ENCODE measurements at regions of chr1 and their contacts with region 1.

Region 1: GRCh38 chr1:21216835-21217811 is 40.4 kb upstream of the EIF4G3 start:
- H3K4me3 ChIP-seq: no peak overlapping the region
- H3K27ac ChIP-seq: no peak overlapping the region
- H3K4me1 ChIP-seq: no peaks in the 10 kb centered on the region
- CTCF ChIP-seq: peak; percentile 36; the same call in 1 of the 2 replicates

Region 2: DNA sequence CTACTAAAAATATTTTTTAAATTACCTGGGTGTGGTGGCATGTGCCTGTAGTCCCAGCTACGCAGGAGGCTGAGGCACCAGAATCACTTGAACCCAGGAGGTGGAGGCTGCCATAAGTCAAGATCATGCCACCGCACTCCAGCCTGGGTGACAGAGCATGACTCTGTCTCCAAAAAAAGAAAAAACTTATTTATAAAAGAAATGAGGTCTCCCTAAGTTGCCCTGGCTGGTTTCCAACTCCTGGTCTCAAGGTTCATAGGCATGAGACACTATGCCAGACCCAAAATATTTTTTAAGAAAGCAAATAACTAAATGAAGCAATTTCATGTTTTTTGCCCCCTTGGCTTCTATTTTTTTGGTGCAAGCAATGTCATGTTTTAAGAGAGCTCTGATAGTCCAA is 73.4 kb before region 1 on chr1:
- CTCF ChIA-PET with region 1: no interaction called
- POLR2A ChIA-PET with region 1: no interaction called
- H3K4me3 ChIP-seq: no peak overlapping the region
- H3K27ac ChIP-seq: no peak overlapping the region
- H3K4me1 ChIP-seq: 0 out of 2 replicates have a peak, but pooled peaks cover 3% of the 10 kb centered on the region
- CTCF ChIP-seq: no peak

Region 3: GRCh38 chr1:21244986-21245687 is 28.0 kb after region 1 on chr1:
- CTCF ChIA-PET with region 1: interaction called, 10 read pairs
- POLR2A ChIA-PET with region 1: no interaction called
- H3K4me3 ChIP-seq: no peak overlapping the region
- H3K27ac ChIP-seq: no peak overlapping the region
- H3K4me1 ChIP-seq: no peaks in the 10 kb centered on the region
- CTCF ChIP-seq: no peak

Measured in HEK293 (cell line).